Activated naive CD8-positive, alpha-beta T cell treated with anti-CD3 and anti-CD28 coated beads, Interleukin-2, amount 10 ng/mL, durations not matched to agents 7 days and 5 days (primary cell): ENCODE measurements at regions of chr6 and their contacts with region 1.

Region 1: GRCh38 chr6:32177788-32178546 is at the start of gene RNF5:
- DNase-seq: peak; percentile 82
- ATAC-seq: peak; percentile 89
- H3K4me3 Mint-ChIP-seq: peak within 1 kb of the TSS; percentile 97
- H3K27ac Mint-ChIP-seq: peak within 1 kb of the TSS; percentile 98
- H3K4me1 Mint-ChIP-seq: peaks cover 52% of the 10 kb centered on the region
- H3K27me3 Mint-ChIP-seq: no peaks in the 10 kb centered on the region
- total RNA-seq, gene RNF5: 44.5 to 49.5 TPM

Region 2: GRCh38 chr6:32166411-32167061 is 11.4 kb before region 1 on chr6:
- POLR2A ChIA-PET with region 1: no interaction called
- DNase-seq: no peak
- ATAC-seq: peak; percentile 11
- H3K4me3 Mint-ChIP-seq: no peak overlapping the region
- H3K27ac Mint-ChIP-seq: peak overlapping the region; percentile 16
- H3K4me1 Mint-ChIP-seq: no peaks in the 10 kb centered on the region
- H3K27me3 Mint-ChIP-seq: no peaks in the 10 kb centered on the region

Region 3: DNA sequence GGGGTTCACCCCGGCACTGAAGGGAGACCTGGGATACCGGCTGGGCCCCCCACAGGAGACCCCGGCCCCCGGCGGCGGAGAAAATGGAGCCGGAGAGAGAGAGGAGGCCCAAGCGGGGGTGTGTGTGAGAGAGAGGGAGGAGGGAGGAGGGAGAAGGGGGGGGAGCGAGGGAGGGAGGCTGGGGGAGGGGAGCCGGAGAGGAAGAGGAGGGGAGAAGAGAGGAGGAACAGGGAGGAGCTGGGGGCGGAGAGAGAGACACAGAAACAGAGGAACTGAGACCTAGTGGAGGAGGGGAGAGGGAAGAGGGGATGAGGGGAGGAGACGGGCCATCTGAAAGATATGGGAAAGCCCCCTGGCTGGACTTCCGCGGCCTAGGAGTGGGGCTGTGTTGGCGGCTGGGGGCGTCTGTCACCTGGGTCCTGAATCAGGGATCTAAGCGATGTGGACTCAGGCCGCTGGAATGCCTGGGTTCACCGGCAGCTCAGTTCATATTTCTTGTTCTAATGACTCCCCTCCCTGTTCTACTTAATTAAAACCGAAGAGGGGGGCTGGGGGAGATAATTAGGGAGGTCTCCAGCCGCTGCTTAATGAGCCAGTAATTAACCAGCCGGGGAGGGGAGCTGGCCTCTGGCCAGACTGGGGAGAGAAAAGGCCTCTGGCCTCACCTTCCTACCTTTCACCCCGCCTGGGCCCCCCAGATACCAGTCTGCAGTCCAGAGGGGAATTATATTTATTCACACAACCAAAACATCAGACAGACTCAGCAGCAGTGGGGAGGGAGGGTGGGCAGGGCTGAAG is 12.3 kb after region 1 on chr6 and contains the start of gene PBX2:
- POLR2A ChIA-PET with region 1: interaction called, 61 read pairs
- DNase-seq: peak; percentile 74
- ATAC-seq: peak; percentile 62
- H3K4me3 Mint-ChIP-seq: peak within 1 kb of the TSS; percentile 98
- H3K27ac Mint-ChIP-seq: peak within 1 kb of the TSS; percentile 98
- H3K4me1 Mint-ChIP-seq: peaks cover 46% of the 10 kb centered on the region
- H3K27me3 Mint-ChIP-seq: no peaks in the 10 kb centered on the region
- total RNA-seq, gene PBX2: 107 to 112 TPM

Region 4: DNA sequence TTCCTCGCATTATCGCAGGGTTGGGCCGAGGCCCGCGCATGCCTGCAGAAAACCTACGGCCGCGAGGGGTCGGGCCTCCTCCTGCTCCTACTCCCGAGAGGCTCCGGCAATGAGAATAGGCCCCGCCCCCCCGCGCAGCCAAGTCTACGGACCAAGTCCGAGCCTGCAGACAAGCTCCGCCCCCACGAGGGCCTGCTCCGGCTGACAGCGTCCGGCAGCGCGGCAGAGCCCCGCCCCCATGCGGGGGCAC is 17.6 kb after region 1 on chr6:
- POLR2A ChIA-PET with region 1: interaction called, 61 read pairs
- DNase-seq: peak; percentile 100
- ATAC-seq: peak; percentile 90
- H3K4me3 Mint-ChIP-seq: peak overlapping the region; percentile 96
- H3K27ac Mint-ChIP-seq: peak overlapping the region; percentile 98
- H3K4me1 Mint-ChIP-seq: peaks cover 24% of the 10 kb centered on the region
- H3K27me3 Mint-ChIP-seq: no peaks in the 10 kb centered on the region

Region 5: DNA sequence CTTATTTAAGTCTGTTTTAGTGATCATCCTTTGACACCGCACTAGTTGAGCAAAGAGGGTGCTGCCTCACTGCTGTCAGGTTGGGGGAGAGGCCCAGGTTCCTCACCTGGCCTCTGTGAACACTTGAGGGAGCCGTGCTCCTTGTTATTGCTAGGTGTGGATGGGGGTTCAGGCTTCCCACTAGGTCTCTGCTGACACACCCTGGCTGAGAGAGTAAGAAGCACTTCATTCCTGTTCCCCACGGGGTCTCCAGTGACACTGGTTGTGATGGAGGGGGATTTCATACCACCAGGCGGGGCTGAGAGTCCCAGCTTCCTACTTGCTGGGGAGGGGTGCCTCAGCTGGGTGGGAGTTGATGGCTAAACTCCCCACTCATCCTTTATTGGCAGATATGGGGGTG is 57.0 kb after region 1 on chr6:
- POLR2A ChIA-PET with region 1: no interaction called
- DNase-seq: no peak
- ATAC-seq: peak; percentile 42
- H3K4me3 Mint-ChIP-seq: no peak overlapping the region
- H3K27ac Mint-ChIP-seq: no peak overlapping the region
- H3K4me1 Mint-ChIP-seq: no peaks in the 10 kb centered on the region
- H3K27me3 Mint-ChIP-seq: no peaks in the 10 kb centered on the region